ENCODE measurements at regions of chr11 and their contacts with region 1.

Region 1: GRCh38 chr11:123246749-123247495 is 51.9 kb upstream of the CLMP start:
- DNase-seq: peak; percentile 93
- H3K4me3 ChIP-seq: no peak overlapping the region
- H3K27ac ChIP-seq: no peak overlapping the region
- H3K4me1 ChIP-seq: peaks cover 45% of the 10 kb centered on the region
- H3K27me3 ChIP-seq: no peaks in the 10 kb centered on the region
- CTCF ChIP-seq: peak; percentile 100

Region 2: DNA sequence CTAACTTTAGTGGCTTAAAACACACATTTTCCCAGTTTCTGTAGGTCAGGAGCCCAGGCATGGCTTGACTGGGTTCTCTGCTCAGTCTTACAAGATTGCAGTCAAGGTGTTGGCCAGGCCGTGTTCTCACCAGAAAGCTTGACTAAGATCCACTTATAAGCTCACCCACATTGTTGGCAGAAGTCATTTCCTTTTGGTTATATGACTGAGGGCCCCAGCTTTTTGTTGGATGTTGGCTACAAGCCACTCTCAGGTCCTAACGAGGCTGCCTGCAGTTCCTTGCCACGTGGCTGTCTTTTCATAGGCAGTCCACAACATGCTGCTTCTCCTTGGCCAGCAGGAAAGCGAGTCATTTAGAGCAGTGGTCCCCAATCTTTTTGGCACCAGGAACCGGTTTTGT is 487.9 kb before region 1 on chr11:
- CTCF ChIA-PET with region 1: no interaction called
- POLR2A ChIA-PET with region 1: no interaction called
- intact Hi-C with region 1: no loop called
- DNase-seq: peak; percentile 81
- H3K4me3 ChIP-seq: no peak overlapping the region
- H3K27ac ChIP-seq: peak overlapping the region; percentile 72
- H3K4me1 ChIP-seq: peaks cover 52% of the 10 kb centered on the region
- H3K27me3 ChIP-seq: no peaks in the 10 kb centered on the region
- CTCF ChIP-seq: no peak

Region 3: DNA sequence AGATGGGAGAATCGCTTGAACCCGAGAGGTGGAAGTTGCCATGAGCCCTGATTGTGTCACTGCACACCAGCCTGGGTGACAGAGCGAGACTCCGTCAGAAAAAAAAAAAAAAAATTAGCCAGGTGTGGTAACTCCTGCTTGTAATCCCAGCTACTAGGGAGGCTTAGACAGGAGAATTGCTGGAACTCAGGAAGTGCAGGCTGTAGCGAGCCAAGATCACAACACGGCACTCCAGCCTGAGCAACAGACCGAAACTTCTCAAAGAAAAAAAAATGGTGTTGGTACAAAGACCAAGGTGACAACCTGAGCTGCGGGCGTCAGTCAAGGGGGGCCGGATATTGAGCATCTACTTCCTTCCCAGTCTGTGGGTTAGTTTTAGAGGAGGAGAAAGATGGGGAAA is 136.6 kb before region 1 on chr11:
- CTCF ChIA-PET with region 1: interaction called, 61 read pairs
- POLR2A ChIA-PET with region 1: no interaction called
- intact Hi-C with region 1: loop called (anchors 1 kb)
- DNase-seq: no peak
- H3K4me3 ChIP-seq: no peak overlapping the region
- H3K27ac ChIP-seq: no peak overlapping the region
- H3K4me1 ChIP-seq: peaks cover 21% of the 10 kb centered on the region
- H3K27me3 ChIP-seq: no peaks in the 10 kb centered on the region
- CTCF ChIP-seq: no peak

Region 4: GRCh38 chr11:123166071-123166559 is 80.8 kb before region 1 on chr11:
- CTCF ChIA-PET with region 1: interaction called, 6 read pairs
- POLR2A ChIA-PET with region 1: no interaction called
- intact Hi-C with region 1: loop called (anchors 1 kb)
- DNase-seq: peak; percentile 84
- H3K4me3 ChIP-seq: no peak overlapping the region
- H3K27ac ChIP-seq: peak overlapping the region; percentile 55
- H3K4me1 ChIP-seq: peaks cover 64% of the 10 kb centered on the region
- H3K27me3 ChIP-seq: no peaks in the 10 kb centered on the region
- CTCF ChIP-seq: peak; percentile 96

Region 5: DNA sequence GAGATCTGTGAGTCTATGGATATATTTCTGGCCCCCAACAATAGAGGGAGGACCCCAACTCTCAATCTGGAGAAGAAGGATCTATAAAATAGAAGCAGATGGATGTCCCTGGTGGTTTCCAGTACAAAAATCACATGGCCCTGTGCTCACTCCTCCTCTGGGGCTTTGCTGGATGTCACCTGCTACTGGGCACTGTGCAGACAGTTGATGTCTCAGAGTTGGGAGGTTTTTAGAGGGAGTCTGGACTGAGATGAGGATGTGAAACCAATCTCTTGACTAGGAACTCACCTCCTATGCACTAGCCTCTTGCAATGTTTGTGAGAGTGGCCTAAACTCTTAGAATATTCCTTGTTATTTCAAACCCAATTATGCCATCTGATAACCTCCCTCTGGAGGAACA is 300.3 kb after region 1 on chr11:
- CTCF ChIA-PET with region 1: no interaction called
- POLR2A ChIA-PET with region 1: no interaction called
- intact Hi-C with region 1: no loop called
- DNase-seq: no peak
- H3K4me3 ChIP-seq: no peak overlapping the region
- H3K27ac ChIP-seq: no peak overlapping the region
- H3K4me1 ChIP-seq: peaks cover 6% of the 10 kb centered on the region
- H3K27me3 ChIP-seq: no peaks in the 10 kb centered on the region
- CTCF ChIP-seq: no peak

Measured in A673 (cell line).